ENCODE measurements at regions of chr11 and their contacts with region 1.

Region 1: GRCh38 chr11:17354601-17354991 is 3.0 kb downstream of the NCR3LG1 start:
- DNase-seq: peak; percentile 56
- H3K4me3 Mint-ChIP-seq: peak overlapping the region; percentile 73
- H3K27ac Mint-ChIP-seq: peak overlapping the region; percentile 73
- H3K4me1 Mint-ChIP-seq: peaks cover 40% of the 10 kb centered on the region
- H3K27me3 Mint-ChIP-seq: peaks cover 43% of the 10 kb centered on the region

Region 2: DNA sequence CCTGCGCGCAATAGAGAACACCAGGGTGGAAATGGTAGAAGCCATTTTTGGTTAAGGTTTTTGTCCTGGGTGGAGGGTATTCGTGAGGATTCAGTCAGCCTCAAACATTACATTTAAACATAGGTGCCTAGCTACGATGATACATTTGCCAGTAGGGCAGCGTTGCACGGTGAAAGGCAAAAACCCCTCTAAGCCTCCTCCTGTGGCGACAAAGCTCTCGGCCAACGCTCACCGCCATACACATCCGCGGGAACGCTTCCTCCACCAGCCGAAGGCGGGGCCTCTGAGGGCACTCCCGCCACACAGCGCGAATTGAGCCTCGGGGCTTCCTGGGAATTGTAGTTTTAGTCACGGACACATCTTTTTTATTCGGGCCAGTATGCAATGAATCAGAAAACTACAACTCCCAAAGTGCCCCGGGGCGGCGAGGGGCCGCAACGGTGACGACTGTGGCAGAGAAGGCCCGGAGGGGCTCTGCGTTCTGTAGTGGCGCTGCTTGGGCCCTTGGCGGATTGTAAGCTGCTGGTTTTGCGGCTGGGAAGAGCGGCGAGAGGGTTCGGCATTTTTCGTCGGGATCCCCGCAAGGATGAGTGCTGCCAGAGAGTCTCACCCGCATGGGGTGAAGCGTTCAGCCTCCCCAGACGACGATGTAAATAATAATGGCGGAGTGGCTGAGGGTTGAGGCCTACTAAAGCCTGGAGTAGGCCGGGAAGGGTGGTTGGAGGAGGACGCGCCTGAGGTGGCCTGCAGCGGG is 616.2 kb before region 1 on chr11 and contains the start of gene C11orf58:
- intact Hi-C with region 1: loop called (anchors 5 kb)
- DNase-seq: peak; percentile 93
- H3K4me3 Mint-ChIP-seq: peak within 1 kb of the TSS; percentile 73
- H3K27ac Mint-ChIP-seq: peak within 1 kb of the TSS; percentile 88
- H3K4me1 Mint-ChIP-seq: peaks cover 32% of the 10 kb centered on the region
- H3K27me3 Mint-ChIP-seq: no peaks in the 10 kb centered on the region
- total RNA-seq, gene C11orf58: 150 and 152 TPM in 2 replicates

Region 3: GRCh38 chr11:17230867-17231851 is 123.4 kb before region 1 on chr11:
- intact Hi-C with region 1: loop called (anchors 1 kb)
- DNase-seq: peak; percentile 44
- H3K4me3 Mint-ChIP-seq: no peak overlapping the region
- H3K27ac Mint-ChIP-seq: peak overlapping the region; percentile 77
- H3K4me1 Mint-ChIP-seq: peaks cover 20% of the 10 kb centered on the region
- H3K27me3 Mint-ChIP-seq: peaks cover 36% of the 10 kb centered on the region

Region 4: GRCh38 chr11:17314232-17314547 is 40.4 kb before region 1 on chr11:
- intact Hi-C with region 1: loop called (anchors 2 kb)
- DNase-seq: no peak
- H3K4me3 Mint-ChIP-seq: no peak overlapping the region
- H3K27ac Mint-ChIP-seq: no peak overlapping the region
- H3K4me1 Mint-ChIP-seq: no peaks in the 10 kb centered on the region
- H3K27me3 Mint-ChIP-seq: no peaks in the 10 kb centered on the region

Region 5: DNA sequence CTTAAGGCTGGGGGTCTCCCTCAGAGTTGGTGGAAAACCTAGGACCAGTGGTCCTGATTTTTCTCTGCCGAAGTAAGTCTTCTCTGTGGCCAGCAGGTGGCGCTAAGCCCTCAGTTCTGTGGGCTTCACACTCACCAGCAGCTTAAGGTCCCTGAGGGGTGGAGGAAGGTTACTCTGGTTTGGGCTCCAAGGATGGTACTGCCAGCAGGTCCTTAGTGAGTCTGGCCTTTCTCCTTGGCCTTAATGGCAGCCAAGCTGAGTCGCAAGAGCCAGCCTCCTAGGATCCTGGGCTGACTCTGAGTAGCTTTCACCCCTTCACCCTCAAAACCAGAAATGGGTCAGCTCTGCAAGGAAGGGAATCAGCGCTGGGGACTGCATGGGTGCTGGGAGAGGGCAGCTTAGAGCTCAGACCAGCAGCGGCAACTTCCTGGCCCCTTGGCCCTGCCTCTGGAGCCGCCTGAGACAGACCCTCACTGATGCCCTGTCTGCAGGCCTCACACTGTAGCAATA is 29.5 kb after region 1 on chr11:
- intact Hi-C with region 1: loop called (anchors 1 kb)
- DNase-seq: peak; percentile 50
- H3K4me3 Mint-ChIP-seq: no peak overlapping the region
- H3K27ac Mint-ChIP-seq: no peak overlapping the region
- H3K4me1 Mint-ChIP-seq: no peaks in the 10 kb centered on the region
- H3K27me3 Mint-ChIP-seq: peaks cover 11% of the 10 kb centered on the region

Region 6: DNA sequence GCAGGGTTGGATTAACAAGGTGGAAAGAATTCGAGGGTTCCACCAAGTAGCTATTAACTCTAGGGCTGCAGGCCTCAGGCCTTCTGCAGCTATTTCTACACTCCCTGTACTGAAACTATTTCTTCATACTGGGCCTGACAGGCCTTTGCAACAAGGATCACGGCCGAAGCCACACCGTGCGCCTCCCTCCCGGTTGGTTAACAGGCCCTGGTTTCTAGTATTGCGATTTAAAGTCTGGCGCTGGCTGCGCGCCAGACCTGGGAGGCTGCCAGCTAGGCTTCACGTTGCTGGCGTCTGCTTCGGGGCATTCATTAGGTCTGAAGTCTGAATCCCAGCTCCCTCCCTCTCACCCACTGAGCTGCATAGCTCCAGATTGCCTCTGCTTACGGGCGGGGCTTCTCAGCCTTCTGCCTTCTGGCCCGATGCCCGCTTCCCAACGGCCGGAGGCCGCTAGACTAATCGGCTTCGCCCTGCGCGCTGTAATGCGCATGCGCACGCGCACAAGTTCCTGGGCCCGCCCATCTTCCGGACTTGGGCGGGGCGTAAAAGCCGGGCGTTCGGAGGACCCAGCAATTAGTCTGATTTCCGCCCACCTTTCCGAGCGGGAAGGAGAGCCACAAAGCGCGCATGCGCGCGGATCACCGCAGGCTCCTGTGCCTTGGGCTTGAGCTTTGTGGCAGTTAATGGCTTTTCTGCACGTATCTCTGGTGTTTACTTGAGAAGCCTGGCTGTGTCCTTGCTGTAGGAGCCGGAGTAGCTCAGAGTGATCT is 1041.3 kb after region 1 on chr11:
- intact Hi-C with region 1: loop called (anchors 2 kb)
- DNase-seq: peak; percentile 96
- H3K4me3 Mint-ChIP-seq: peak overlapping the region; percentile 99
- H3K27ac Mint-ChIP-seq: peak overlapping the region; percentile 98
- H3K4me1 Mint-ChIP-seq: peaks cover 67% of the 10 kb centered on the region
- H3K27me3 Mint-ChIP-seq: no peaks in the 10 kb centered on the region

Measured in activated T-helper 1 cell treated with anti-CD3 and anti-CD28 coated beads, Interleukin-12 subunit alpha, Interleukin-12 subunit beta, Interleukin-2, Interleukin-4 antibody, amounts not matched to agents 30 ng/mL and 10 ng/mL and 1 ng/mL, durations not matched to agents 14 hours and 24 hours and 36 hours (primary cell).